Panc1 (cell line): ENCODE measurements at regions of chr4 and their contacts with region 1.

Region 1: GRCh38 chr4:12852338-12853307 is 631.5 kb downstream of the RAB28 start:
- DNase-seq: peak; percentile 46
- ATAC-seq: peak; percentile 80
- H3K4me3 ChIP-seq: no peak overlapping the region
- H3K27ac ChIP-seq: no peak overlapping the region
- H3K4me1 ChIP-seq: no peaks in the 10 kb centered on the region
- H3K27me3 ChIP-seq: no peaks in the 10 kb centered on the region
- CTCF ChIP-seq: peak; percentile 59

Region 2: DNA sequence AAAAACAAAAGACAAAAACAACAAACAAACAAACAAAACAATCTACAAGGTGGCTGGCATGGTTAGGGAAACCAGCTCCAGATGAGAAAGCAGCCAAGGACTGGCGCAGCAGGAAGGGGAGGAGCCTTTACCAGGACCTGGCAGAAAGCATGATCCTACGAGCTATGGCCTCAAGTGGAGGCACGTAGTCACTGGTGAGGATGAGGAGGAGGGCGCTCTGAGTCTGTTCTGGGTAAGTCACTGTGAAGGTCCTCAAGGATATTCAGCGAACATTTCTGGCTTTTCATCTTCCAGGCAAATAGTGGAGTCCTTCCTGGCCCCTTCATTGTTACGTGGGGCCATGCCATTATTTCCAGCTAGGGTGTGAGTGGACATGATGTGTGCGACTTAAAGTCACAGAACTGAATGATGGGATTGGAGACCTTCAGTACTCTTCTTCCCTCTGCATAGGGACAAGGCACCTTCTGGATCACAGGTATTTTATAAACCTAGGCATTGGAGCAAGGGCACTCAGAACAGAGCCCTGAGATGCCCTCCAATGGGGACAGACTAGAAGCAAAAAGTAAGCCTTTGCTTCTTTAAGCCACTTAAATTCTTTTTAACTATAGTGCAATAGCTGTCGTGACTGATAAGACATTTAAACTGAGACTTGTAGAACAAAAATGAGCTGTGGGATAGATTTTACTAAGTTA is 139.8 kb before region 1 on chr4:
- CTCF ChIA-PET with region 1: no interaction called
- POLR2A ChIA-PET with region 1: no interaction called
- in situ Hi-C with region 1: no loop called
- intact Hi-C with region 1: no loop called
- DNase-seq: no peak
- ATAC-seq: no peak
- H3K4me3 ChIP-seq: no peak overlapping the region
- H3K27ac ChIP-seq: no peak overlapping the region
- H3K4me1 ChIP-seq: no peaks in the 10 kb centered on the region
- H3K27me3 ChIP-seq: no peaks in the 10 kb centered on the region
- CTCF ChIP-seq: no peak

Region 3: DNA sequence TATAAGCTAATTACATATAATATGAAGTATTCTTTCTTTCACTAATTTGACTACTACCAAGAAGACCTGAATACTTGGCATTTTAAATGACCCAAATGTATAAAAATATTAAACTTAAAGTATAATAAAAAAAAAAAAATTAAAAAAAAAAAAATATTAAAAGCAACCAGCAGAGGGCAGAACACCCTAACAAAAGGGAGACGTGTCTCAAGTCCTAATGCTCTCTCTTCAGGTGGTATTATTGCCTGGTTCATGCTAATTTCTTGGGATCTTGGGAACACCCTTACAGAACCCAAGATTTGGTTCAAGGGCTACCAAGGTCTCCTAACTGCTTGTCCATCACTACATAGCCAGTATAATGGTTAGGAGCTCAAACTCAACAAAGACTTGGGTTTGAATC is 123.2 kb before region 1 on chr4:
- CTCF ChIA-PET with region 1: no interaction called
- POLR2A ChIA-PET with region 1: no interaction called
- in situ Hi-C with region 1: no loop called
- intact Hi-C with region 1: loop called (anchors 5 kb)
- DNase-seq: no peak
- ATAC-seq: no peak
- H3K4me3 ChIP-seq: no peak overlapping the region
- H3K27ac ChIP-seq: no peak overlapping the region
- H3K4me1 ChIP-seq: no peaks in the 10 kb centered on the region
- H3K27me3 ChIP-seq: no peaks in the 10 kb centered on the region
- CTCF ChIP-seq: peak; percentile 35

Region 4: GRCh38 chr4:12761694-12762093 is 90.9 kb before region 1 on chr4:
- CTCF ChIA-PET with region 1: no interaction called
- POLR2A ChIA-PET with region 1: no interaction called
- in situ Hi-C with region 1: no loop called
- intact Hi-C with region 1: no loop called
- DNase-seq: no peak
- ATAC-seq: no peak
- H3K4me3 ChIP-seq: no peak overlapping the region
- H3K27ac ChIP-seq: no peak overlapping the region
- H3K4me1 ChIP-seq: no peaks in the 10 kb centered on the region
- H3K27me3 ChIP-seq: no peaks in the 10 kb centered on the region
- CTCF ChIP-seq: no peak

Region 5: DNA sequence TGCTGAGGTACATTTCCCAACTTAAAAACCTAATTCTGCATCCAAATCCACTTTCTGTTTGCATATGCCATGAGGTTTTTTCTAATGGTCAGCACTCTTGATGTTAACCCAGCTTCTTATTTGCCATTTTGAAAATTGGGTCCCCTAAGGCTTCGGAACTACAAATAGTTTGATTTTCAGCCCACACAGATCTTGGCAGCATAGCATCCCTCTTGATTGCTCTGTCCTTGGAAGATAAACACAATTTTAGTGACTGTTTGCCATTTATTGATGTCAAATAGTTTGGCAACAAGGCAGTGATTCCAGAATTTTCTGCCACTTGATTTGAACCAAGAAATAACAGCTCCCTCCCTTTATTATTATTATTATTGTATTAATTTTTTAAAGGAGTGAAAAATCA is 65.4 kb before region 1 on chr4:
- CTCF ChIA-PET with region 1: interaction called, 11 read pairs
- POLR2A ChIA-PET with region 1: no interaction called
- in situ Hi-C with region 1: no loop called
- intact Hi-C with region 1: no loop called
- DNase-seq: no peak
- ATAC-seq: no peak
- H3K4me3 ChIP-seq: no peak overlapping the region
- H3K27ac ChIP-seq: no peak overlapping the region
- H3K4me1 ChIP-seq: no peaks in the 10 kb centered on the region
- H3K27me3 ChIP-seq: no peaks in the 10 kb centered on the region
- CTCF ChIP-seq: no peak